ENCODE measurements at regions of chr9 and their contacts with region 1.

Region 1: GRCh38 chr9:115524453-115525059 is 406.6 kb upstream of the TNC start:
- DNase-seq: no peak
- ATAC-seq: peak; percentile 34
- H3K4me3 Mint-ChIP-seq: no peak overlapping the region
- H3K27ac Mint-ChIP-seq: no peak overlapping the region
- H3K4me1 Mint-ChIP-seq: no peaks in the 10 kb centered on the region
- H3K27me3 Mint-ChIP-seq: peaks cover 5% of the 10 kb centered on the region
- CTCF ChIP-seq: no peak

Region 2: DNA sequence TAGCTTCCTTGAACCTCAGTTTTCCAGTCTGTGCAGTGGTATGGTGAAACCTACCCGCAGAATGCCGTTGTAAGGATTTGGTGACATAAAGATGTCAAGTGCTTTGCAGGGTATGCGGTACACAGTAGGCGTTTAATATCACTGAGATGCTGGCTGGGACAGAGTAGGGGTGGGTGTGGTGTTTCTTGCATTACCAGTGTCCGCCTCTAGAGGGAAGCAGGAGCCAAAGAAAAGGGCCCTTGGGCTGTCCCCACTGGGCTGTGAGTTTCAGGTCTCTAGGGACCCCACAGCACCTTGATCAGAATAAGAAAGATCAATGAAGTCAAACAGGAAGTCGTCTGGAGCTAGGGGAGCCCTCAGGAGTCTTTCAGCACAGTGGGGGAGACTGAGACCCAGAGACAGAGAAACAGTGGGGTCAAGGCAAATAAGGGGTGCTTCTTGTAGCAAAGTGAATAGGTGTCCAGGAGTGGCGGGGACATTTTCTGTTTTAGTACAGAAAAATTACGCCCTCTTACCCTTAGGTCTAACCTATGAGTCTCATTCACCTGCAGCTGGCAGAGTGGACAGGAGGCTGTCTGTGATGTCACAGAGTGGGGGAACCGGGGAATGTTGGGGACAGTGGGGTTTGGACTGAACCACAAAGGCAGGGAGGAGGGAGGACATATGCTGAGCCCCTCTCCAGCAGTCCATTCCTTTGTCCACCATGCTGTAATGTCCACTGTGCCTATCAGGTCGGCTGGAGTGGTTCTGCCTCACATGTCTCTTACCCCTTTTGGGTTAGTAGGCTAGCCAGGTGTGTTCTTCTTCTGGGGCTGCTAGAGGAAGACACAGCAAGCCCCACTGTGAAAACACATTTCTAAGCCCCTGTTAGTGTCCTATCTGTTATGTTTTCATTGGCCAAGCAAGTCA is 862.2 kb before region 1 on chr9:
- CTCF ChIA-PET with region 1: no interaction called
- POLR2A ChIA-PET with region 1: no interaction called
- intact Hi-C with region 1: loop called (anchors 5 kb)
- DNase-seq: peak; percentile 37
- ATAC-seq: peak; percentile 100
- H3K4me3 Mint-ChIP-seq: no peak overlapping the region
- H3K27ac Mint-ChIP-seq: no peak overlapping the region
- H3K4me1 Mint-ChIP-seq: peaks cover 6% of the 10 kb centered on the region
- H3K27me3 Mint-ChIP-seq: no peaks in the 10 kb centered on the region
- CTCF ChIP-seq: peak; percentile 45

Region 3: DNA sequence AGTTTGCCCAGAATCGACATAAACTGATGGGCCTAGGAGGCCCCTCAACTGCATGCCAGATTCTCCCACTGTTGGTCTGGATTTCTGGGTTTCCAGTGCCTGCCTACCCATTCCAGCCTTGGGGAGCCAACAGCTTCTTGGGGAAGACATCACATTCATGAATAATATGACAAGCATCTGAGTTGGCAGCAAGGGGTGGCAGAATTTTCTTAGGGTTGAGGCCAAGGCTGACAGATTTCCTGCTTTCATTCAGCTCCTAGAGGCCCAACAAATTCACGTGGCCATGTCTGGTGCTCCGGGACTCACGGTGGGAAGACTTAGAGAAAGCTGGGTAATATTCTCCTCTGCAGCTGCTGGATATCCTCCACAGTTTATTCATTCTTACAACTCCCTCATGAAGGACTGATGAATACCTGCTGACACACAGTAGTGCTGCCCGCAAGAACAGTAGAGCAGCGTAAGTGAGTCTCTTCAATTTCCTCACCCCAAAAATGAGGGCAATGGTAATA is 101.6 kb before region 1 on chr9:
- CTCF ChIA-PET with region 1: no interaction called
- POLR2A ChIA-PET with region 1: no interaction called
- intact Hi-C with region 1: no loop called
- DNase-seq: no peak
- ATAC-seq: no peak
- H3K4me3 Mint-ChIP-seq: no peak overlapping the region
- H3K27ac Mint-ChIP-seq: no peak overlapping the region
- H3K4me1 Mint-ChIP-seq: no peaks in the 10 kb centered on the region
- H3K27me3 Mint-ChIP-seq: no peaks in the 10 kb centered on the region
- CTCF ChIP-seq: no peak

Region 4: DNA sequence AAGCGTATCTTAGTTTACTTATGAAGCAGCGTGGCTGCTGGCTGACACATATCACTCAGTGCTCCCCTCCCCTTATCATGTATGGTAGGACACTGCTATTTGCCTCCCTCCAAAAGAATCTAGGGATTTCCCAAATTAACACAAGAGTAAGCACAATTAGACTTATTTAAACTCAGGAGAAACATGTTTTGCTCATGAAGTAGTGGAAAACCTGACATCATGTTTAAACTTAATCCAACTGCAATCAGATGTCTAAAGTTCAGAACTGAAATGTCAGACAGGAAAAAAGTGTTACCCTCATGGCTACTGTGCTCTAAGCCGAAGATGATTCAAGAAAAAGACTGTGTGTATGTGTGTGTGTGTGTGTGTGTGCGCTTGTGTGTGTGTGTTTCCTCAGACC is 82.5 kb before region 1 on chr9:
- CTCF ChIA-PET with region 1: no interaction called
- POLR2A ChIA-PET with region 1: no interaction called
- intact Hi-C with region 1: no loop called
- DNase-seq: no peak
- ATAC-seq: no peak
- H3K4me3 Mint-ChIP-seq: no peak overlapping the region
- H3K27ac Mint-ChIP-seq: no peak overlapping the region
- H3K4me1 Mint-ChIP-seq: no peaks in the 10 kb centered on the region
- H3K27me3 Mint-ChIP-seq: peaks cover 4% of the 10 kb centered on the region
- CTCF ChIP-seq: no peak